ENCODE measurements at regions of chr10 and their contacts with region 1.

Region 1: GRCh38 chr10:122019414-122019975 is 30.5 kb downstream of the TACC2 start:
- DNase-seq: peak; percentile 49 to 74
- H3K4me3 ChIP-seq: peak overlapping the region; percentile 75
- H3K27ac ChIP-seq: peak overlapping the region; percentile 90
- H3K4me1 ChIP-seq: peaks cover 8% of the 10 kb centered on the region
- H3K27me3 ChIP-seq: no peaks in the 10 kb centered on the region
- CTCF ChIP-seq: no peak

Region 2: DNA sequence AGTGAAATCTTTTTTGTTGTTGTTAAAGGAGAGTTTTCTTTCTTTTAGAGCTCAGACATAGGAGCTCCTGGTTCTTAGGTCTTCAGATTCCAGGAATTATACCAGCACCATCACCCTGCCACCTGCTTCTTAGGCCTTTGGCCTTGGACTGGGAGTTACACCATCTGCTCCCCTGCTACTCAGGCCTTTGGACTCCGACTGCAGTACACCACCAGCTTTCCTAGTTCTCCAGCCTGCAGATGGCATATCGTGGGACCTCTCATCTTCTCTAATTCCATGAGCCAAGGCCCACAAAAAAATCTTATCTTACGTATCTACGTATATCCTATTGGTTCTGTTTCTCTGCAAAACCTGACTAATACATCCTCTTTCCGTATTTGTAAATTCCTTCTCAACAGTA is 35.6 kb before region 1 on chr10:
- CTCF ChIA-PET with region 1: no interaction called
- POLR2A ChIA-PET with region 1: interaction called, 15 read pairs
- intact Hi-C with region 1: no loop called
- DNase-seq: no peak
- H3K4me3 ChIP-seq: no peak overlapping the region
- H3K27ac ChIP-seq: no peak overlapping the region
- H3K4me1 ChIP-seq: no peaks in the 10 kb centered on the region; the same call in 1 of the 2 replicates
- H3K27me3 ChIP-seq: no peaks in the 10 kb centered on the region
- CTCF ChIP-seq: no peak